HEK293 (cell line): ENCODE measurements at regions of chr3 and their contacts with region 1.

Region 1: GRCh38 chr3:123642182-123642956 is 57.5 kb upstream of the HACD2 start:
- H3K4me3 ChIP-seq: no peak overlapping the region
- H3K27ac ChIP-seq: no peak overlapping the region
- H3K4me1 ChIP-seq: no peaks in the 10 kb centered on the region
- CTCF ChIP-seq: no peak

Region 2: DNA sequence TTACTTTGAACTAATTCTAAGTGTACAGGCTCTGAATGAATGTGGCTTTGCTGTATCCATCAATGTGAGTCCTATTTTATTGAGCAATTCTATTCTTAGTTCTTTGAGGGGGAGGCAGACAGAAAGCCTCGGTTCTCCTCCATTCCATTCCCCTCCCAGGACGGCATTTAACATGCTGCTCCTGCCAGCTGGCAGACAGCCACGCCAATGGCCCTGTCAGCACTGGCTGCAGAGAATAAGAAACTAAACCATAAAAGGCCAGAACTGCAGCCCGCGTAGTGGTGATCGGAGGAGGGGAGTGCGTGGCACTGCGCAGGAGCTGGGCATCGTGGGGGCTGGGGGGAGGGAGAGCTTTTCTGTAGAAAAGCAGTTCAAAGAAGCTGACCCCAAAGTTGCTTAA is 18.5 kb after region 1 on chr3:
- CTCF ChIA-PET with region 1: interaction called, 82 read pairs
- POLR2A ChIA-PET with region 1: no interaction called
- H3K4me3 ChIP-seq: no peak overlapping the region
- H3K27ac ChIP-seq: no peak overlapping the region
- H3K4me1 ChIP-seq: no peaks in the 10 kb centered on the region; the same call in 1 of the 2 replicates
- CTCF ChIP-seq: no peak

Region 3: GRCh38 chr3:123712077-123712860 is 69.9 kb after region 1 on chr3:
- CTCF ChIA-PET with region 1: interaction called, 17 read pairs
- POLR2A ChIA-PET with region 1: no interaction called
- H3K4me3 ChIP-seq: no peak overlapping the region
- H3K27ac ChIP-seq: no peak overlapping the region
- H3K4me1 ChIP-seq: no peaks in the 10 kb centered on the region
- CTCF ChIP-seq: no peak

Region 4: GRCh38 chr3:123723522-123724168 is 81.3 kb after region 1 on chr3:
- CTCF ChIA-PET with region 1: interaction called, 81 read pairs
- POLR2A ChIA-PET with region 1: no interaction called
- H3K4me3 ChIP-seq: no peak overlapping the region
- H3K27ac ChIP-seq: no peak overlapping the region
- H3K4me1 ChIP-seq: no peaks in the 10 kb centered on the region
- CTCF ChIP-seq: 0 out of 2 replicates have a peak, but pooled peaks have one; percentile 29